Endothelial cell of umbilical vein (primary cell): ENCODE measurements at regions of chr21 and their contacts with region 1.

Region 1: DNA sequence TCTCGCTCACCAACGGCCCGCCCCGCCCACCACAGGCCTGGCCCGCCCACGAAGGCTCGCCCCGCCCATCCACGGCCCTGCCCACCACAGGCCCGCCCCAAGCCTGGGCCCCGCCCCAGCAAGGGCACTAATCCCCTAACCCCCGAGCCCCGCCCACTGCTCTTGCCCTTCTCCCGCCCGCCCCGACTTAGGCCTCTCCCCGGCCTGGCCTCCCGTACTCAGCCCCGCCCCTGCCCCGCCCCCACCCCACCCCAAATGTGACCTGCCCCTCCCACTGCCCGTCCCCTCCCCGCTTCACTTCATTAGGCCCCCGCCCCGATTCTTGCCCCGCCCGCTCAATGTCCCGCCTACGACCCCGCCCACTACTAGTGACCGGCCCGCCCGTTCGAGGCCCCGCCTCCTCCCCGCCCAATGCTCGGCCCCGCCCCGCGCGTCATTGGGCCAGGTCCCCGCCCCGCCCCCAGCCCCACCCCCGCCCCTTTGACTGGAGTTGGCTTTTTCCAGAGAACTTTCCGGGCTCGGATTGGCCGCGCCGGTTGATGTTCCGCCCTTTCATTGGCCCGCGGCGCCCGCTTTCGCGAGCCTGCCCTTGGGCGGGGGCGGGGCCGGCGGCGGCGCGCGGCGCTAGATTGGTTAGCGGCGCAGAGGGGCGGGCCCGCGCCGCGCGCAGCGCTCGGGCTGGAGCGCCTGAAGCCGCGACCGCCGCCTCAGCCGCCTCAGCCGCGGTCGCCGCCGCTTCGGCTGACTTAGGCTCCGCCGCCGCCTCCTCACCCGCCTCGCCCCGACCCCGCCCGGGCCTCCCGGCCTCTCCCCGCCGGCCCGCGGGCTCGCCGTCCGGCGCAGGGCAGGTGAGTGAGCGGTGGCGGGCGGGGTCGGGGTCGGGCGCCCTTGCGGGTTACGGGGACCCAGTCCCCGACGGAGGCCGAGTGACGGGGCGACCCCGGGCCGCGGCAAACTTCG is at the start of gene PCBP3:
- DNase-seq: peak; percentile 86
- H3K4me3 ChIP-seq: peak within 1 kb of the TSS; percentile 16 to 32 (median 22)
- H3K27ac ChIP-seq: no peak within 1 kb of the TSS
- H3K4me1 ChIP-seq: no peaks in the 10 kb centered on the region
- H3K27me3 ChIP-seq: peaks cover 13 to 29% of the 10 kb centered on the region in 2 experiments
- CTCF ChIP-seq: no peak
- POLR2A ChIP-seq: no peak
- total RNA-seq, gene PCBP3: 0.39 and 1.1 TPM in 2 replicates

Region 2: GRCh38 chr21:45590246-45590725 is 53.0 kb before region 1 on chr21:
- CTCF ChIA-PET with region 1: no interaction called
- POLR2A ChIA-PET with region 1: no interaction called
- dilution Hi-C with region 1: no loop called
- intact Hi-C with region 1: loop called (anchors 2 kb)
- DNase-seq: peak; percentile 30
- H3K4me3 ChIP-seq: peak overlapping the region; percentile 11 to 39 (median 30)
- H3K27ac ChIP-seq: no peak overlapping the region
- H3K4me1 ChIP-seq: peaks cover 7% of the 10 kb centered on the region
- H3K27me3 ChIP-seq: peaks cover 9 to 10% of the 10 kb centered on the region in 2 experiments
- CTCF ChIP-seq: no peak
- POLR2A ChIP-seq: no peak